ENCODE measurements at regions of chr19 and their contacts with region 1.

Region 1: DNA sequence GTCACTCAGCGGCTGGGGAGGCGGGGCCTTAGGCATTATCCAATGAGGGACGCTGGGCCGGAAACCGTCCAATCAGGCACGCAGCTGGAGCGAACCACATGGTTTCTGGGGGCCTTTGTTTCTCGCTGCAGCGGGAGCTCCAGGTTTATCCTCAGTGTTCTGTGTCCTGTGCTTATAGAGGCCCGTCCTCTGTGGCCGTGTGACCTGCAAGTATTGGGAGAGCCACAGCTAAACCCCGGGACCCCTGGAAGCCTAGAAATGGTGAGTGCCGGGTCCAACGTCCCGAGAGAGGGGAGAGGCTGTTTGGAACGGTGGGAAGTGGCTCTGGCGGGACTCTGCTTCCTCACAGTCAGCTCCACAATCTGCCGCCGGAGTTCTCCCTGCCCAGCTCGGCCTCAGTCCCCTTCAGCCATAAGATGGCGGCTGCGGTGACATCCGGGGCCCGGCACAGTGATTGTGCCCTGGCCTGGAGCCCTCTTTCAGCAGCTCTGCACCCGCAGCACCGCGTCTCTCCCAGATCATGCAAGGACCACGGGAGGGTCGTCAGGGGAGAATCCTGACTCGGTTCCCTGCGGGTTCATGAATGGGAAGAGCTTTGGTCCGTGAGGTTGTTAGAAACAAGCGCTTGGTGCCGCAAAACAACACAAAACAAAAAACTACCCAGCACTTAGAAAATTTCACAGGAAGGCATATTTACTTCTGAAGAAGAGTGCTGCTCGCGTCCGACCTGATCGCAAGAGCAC is at the start of gene ZNF253:
- DNase-seq: peak; percentile 94
- ATAC-seq: peak; percentile 87
- H3K4me3 ChIP-seq: peak within 1 kb of the TSS; percentile 78 to 97 (median 93)
- H3K4me3 Mint-ChIP-seq: peak within 1 kb of the TSS; percentile 100
- H3K27ac ChIP-seq: peak within 1 kb of the TSS; percentile 88 to 91
- H3K27ac Mint-ChIP-seq: peak within 1 kb of the TSS; percentile 98
- H3K4me1 ChIP-seq: peaks cover 15 to 19% of the 10 kb centered on the region in 2 donors
- H3K4me1 Mint-ChIP-seq: peaks cover 35% of the 10 kb centered on the region
- H3K27me3 ChIP-seq: no peaks in the 10 kb centered on the region
- H3K27me3 Mint-ChIP-seq: no peaks in the 10 kb centered on the region
- CTCF ChIP-seq: no peak
- total RNA-seq, gene ZNF253: 28.6 and 33.7 TPM in 2 replicates

Region 2: GRCh38 chr19:19835560-19836038 is 30.3 kb before region 1 on chr19:
- CTCF ChIA-PET with region 1: no interaction called
- POLR2A ChIA-PET with region 1: no interaction called
- intact Hi-C with region 1: no loop called
- DNase-seq: no peak
- ATAC-seq: no peak
- H3K4me3 ChIP-seq: no peak overlapping the region
- H3K4me3 Mint-ChIP-seq: no peak overlapping the region
- H3K27ac ChIP-seq: no peak overlapping the region
- H3K27ac Mint-ChIP-seq: no peak overlapping the region
- H3K4me1 ChIP-seq: no peaks in the 10 kb centered on the region
- H3K4me1 Mint-ChIP-seq: no peaks in the 10 kb centered on the region
- H3K27me3 ChIP-seq: no peaks in the 10 kb centered on the region
- H3K27me3 Mint-ChIP-seq: no peaks in the 10 kb centered on the region
- CTCF ChIP-seq: no peak

Region 3: DNA sequence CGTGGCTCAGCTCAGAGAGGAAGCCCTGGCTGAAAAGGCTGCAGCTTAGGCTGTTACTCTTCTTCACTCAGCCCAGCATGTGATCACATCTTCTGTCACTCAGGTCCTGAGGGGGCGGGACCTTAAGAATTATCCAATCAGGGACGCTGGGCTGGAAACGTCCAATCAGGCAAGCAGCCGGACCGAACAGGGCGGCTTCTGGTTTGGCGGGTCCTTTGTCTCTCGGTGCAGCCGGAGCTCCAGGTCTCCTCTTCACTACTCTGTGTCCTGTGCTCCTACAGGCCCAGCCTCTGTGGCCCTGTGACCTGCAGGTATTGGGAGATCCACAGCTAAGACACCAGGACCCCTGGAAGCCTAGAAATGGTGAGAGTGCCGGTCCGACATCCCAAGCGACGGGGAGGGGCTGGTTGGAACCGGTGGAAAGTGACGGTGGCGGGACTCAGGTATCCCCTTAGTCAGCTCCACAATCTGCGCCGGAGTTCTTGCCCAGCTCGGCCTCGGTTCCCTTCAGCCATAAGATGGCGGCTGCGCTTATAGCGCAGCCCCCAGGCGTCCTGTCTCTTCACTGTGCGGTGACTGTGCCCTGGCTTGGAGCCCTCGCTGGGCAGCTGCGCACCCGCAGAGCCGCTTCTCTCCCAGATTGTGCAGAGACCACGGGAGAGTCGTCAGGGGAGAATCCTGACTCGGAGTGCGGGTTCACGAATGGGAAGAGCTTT is 35.0 kb after region 1 on chr19 and contains the start of gene ZNF93:
- CTCF ChIA-PET with region 1: interaction called, 5 read pairs
- POLR2A ChIA-PET with region 1: interaction called, 18 read pairs
- intact Hi-C with region 1: loop called (anchors 1 kb)
- DNase-seq: peak; percentile 94
- ATAC-seq: peak; percentile 98
- H3K4me3 ChIP-seq: peak within 1 kb of the TSS; percentile 85 to 94 (median 87)
- H3K4me3 Mint-ChIP-seq: peak within 1 kb of the TSS; percentile 98
- H3K27ac ChIP-seq: peak within 1 kb of the TSS; percentile 71 to 74
- H3K27ac Mint-ChIP-seq: peak within 1 kb of the TSS; percentile 91
- H3K4me1 ChIP-seq: peaks cover 6 to 16% of the 10 kb centered on the region in 2 donors
- H3K4me1 Mint-ChIP-seq: peaks cover 41% of the 10 kb centered on the region
- H3K27me3 ChIP-seq: no peaks in the 10 kb centered on the region
- H3K27me3 Mint-ChIP-seq: no peaks in the 10 kb centered on the region
- CTCF ChIP-seq: no peak
- total RNA-seq, gene ZNF93: 12.5 and 13.3 TPM in 2 replicates

Region 4: DNA sequence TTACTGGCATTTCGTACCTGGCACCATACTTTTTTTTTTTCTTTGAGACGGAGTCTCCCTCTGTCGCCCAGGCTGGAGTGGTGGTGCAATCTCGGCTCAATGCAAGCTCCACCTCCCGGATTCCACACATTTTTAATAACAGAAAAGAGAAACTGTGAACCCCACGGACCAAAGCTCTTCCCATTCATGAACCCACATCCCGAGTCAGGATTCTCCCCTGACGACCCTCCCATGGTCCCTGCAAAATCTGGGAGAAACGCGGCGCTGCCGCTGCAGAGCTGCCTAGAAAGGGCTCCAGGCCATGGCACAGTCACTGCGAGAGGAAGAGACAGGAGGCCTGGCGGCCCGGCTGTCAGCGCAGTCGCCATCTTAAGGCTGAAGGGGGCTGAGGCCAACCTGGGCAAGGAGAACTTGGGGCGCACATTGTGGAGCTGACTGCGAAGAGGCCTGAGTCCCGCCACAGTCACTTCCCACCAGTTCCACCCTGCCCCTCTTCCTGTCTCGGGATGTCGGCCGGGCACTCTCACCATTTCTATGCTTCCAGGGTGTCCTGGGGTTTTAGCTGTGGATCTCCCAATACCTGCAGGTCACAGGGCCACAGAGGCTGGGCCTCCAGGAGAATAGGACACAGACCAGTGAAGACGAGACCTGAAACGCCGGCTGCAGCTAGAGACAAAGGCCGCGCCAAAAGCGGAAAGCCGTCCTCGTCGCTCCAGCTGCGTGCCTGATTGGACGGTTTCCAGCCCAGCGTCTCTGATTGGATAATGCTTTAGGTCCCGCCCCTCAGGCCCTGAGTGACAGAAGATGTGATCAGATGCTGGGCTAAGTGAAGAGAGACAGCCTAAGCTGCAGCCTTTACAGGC is 372.1 kb after region 1 on chr19:
- CTCF ChIA-PET with region 1: no interaction called
- POLR2A ChIA-PET with region 1: no interaction called
- intact Hi-C with region 1: loop called (anchors 2 kb)
- DNase-seq: peak; percentile 91
- ATAC-seq: peak; percentile 85
- H3K4me3 ChIP-seq: peak overlapping the region; percentile 58 to 89 (median 82)
- H3K4me3 Mint-ChIP-seq: peak overlapping the region; percentile 100
- H3K27ac ChIP-seq: peak overlapping the region; percentile 22 to 73
- H3K27ac Mint-ChIP-seq: peak overlapping the region; percentile 87
- H3K4me1 ChIP-seq: peaks cover 3 to 22% of the 10 kb centered on the region in 2 donors
- H3K4me1 Mint-ChIP-seq: peaks cover 29% of the 10 kb centered on the region
- H3K27me3 ChIP-seq: no peaks in the 10 kb centered on the region
- H3K27me3 Mint-ChIP-seq: no peaks in the 10 kb centered on the region
- CTCF ChIP-seq: no peak

Measured in B cell (primary cell).